WTC11 (cell line): ENCODE measurements at regions of chr20 and their contacts with region 1.

Region 1: DNA sequence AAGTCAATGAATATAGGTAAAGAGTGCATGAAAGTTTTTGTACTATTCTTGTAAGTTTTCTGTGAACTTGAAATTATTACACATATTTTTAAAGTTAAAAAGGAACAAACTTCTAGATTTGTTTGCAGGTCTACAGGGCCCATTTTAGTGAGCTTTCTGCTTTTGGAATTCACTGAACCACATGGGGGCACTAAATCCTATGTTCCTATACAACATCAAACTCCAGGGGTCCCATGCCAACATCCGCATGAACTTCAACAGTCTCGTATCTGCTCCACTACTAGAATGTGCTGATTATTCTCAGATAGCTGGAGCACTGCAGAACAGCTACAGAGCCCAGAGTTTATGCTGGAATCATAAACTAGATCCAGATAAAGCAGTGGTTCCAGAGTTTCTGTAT is 347.9 kb upstream of the SPTLC3 start:
- DNase-seq: peak; percentile 43
- ATAC-seq: peak; percentile 93
- H3K4me3 Mint-ChIP-seq: no peak overlapping the region; the same call in 1 of the 2 replicates
- H3K27ac Mint-ChIP-seq: no peak overlapping the region
- H3K4me1 Mint-ChIP-seq: peaks cover 20% of the 10 kb centered on the region
- H3K27me3 Mint-ChIP-seq: peaks cover 2% of the 10 kb centered on the region; the same call in 1 of the 2 replicates
- CTCF ChIP-seq: peak; percentile 48

Region 2: GRCh38 chr20:12394786-12395185 is 266.1 kb before region 1 on chr20:
- CTCF ChIA-PET with region 1: interaction called, 12 read pairs
- POLR2A ChIA-PET with region 1: no interaction called
- DNase-seq: peak; percentile 55
- ATAC-seq: peak; percentile 99
- H3K4me3 Mint-ChIP-seq: no peak overlapping the region
- H3K27ac Mint-ChIP-seq: no peak overlapping the region
- H3K4me1 Mint-ChIP-seq: peaks cover 3% of the 10 kb centered on the region
- H3K27me3 Mint-ChIP-seq: no peaks in the 10 kb centered on the region
- CTCF ChIP-seq: no peak

Region 3: DNA sequence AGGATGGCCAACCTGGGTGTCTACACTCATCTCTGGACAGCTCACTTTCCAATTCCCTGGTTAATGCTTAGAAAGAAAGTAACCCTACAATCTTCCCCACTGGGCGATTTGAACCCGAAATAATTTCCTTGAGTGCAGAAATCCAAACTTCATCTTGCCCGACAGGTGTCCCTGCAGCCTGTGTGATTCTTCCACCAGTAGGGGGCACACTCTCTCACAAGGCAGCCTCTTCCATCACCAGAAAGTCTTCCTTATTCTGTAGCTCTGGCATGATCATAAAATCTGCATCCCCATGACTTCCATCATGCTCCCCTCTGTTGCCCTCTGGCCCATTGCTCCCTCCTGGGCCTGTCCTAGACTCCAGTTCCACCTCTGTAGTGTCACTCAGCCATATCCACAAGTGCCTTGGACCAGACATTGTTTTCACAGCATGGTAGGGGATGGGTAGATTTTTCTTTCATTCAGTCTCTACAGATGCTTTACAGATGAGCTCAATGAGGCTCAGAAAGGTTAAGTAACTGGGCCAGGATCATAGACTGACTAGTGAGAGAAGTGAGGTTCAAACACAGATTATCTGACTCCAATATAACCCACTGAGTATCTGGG is 177.4 kb after region 1 on chr20:
- CTCF ChIA-PET with region 1: interaction called, 12 read pairs
- POLR2A ChIA-PET with region 1: no interaction called
- DNase-seq: peak; percentile 45
- ATAC-seq: peak; percentile 78
- H3K4me3 Mint-ChIP-seq: no peak overlapping the region
- H3K27ac Mint-ChIP-seq: no peak overlapping the region
- H3K4me1 Mint-ChIP-seq: peaks cover 20% of the 10 kb centered on the region
- H3K27me3 Mint-ChIP-seq: no peaks in the 10 kb centered on the region
- CTCF ChIP-seq: peak; percentile 75